ENCODE measurements at regions of chr11 and their contacts with region 1.

Region 1: DNA sequence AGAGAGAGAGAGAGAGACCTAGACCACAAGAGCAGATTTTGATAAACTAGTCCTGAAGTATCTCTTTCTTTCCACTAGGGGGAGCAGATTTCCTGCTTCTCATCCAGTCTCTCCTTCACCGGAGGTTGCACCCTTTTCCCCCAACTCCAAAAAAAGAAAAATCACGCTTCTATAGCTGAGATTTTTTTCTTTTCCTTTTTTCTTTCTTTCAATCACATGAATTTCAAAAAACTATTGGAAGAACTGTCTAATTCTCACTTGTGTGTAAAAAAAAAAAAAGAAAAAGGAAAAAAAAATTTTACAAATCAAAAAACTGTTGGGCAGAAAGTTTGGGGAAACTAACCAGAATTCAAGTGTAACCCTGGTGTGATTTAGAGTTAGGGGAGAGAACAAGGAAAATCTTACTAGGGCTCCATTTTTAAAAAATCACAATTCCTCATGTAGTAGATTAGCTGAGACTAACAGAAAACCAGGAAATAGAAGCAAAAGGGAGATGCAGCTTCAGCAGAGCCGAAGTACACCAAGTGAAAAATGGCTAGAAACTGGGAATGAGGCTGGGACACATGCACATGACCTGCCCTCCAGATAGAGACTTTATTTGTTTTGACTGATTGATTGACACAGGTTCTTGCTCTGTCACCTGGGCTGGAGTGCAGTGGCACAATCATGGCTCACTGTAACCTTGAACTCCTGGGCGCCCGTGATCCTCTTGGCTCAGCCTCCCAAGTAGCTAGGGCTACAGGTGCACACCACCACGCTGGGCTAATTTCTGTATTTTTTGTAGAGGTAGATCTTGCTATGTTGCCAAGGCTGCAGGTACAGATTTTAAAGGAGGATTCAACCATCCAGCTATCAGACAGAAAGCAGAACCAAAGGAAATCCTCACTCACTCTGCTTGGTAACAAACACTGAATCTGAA is 27.1 kb downstream of the SDHD start:
- DNase-seq: peak; percentile 5 to 66
- H3K4me3 ChIP-seq: no peak overlapping the region
- H3K27ac ChIP-seq: no peak overlapping the region
- H3K4me1 ChIP-seq: peaks cover 3% of the 10 kb centered on the region; the same call in 1 of the 2 replicates
- H3K27me3 ChIP-seq: no peaks in the 10 kb centered on the region
- CTCF ChIP-seq: peak; percentile 93

Region 2: GRCh38 chr11:111526501-111526900 is 587.3 kb before region 1 on chr11:
- CTCF ChIA-PET with region 1: no interaction called
- POLR2A ChIA-PET with region 1: no interaction called
- intact Hi-C with region 1: no loop called
- DNase-seq: peak; percentile 2 to 61
- H3K4me3 ChIP-seq: no peak overlapping the region
- H3K27ac ChIP-seq: no peak overlapping the region
- H3K4me1 ChIP-seq: peaks cover 20% of the 10 kb centered on the region
- H3K27me3 ChIP-seq: no peaks in the 10 kb centered on the region
- CTCF ChIP-seq: no peak

Region 3: DNA sequence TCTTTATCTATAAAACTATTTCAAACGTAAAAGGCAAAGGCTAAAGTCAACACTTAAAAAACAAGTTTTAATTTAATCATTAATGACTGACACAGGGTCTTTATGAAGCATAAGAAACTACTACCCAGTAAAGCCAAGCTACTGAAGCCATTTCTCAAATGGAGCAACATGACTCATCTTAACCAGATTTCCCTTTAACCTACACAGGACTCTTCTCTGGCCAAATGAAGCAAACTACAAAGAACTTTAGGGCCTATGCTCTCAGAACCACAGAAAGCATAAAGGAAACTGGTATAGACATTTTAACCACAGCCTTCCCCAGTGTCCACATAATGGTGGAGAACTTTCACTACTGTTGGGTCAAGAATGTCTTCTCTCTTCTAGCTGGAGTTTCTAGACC is 277.1 kb before region 1 on chr11:
- CTCF ChIA-PET with region 1: no interaction called
- POLR2A ChIA-PET with region 1: no interaction called
- intact Hi-C with region 1: no loop called
- DNase-seq: no peak
- H3K4me3 ChIP-seq: no peak overlapping the region
- H3K27ac ChIP-seq: peak overlapping the region; percentile 25
- H3K4me1 ChIP-seq: peaks cover 35% of the 10 kb centered on the region
- H3K27me3 ChIP-seq: no peaks in the 10 kb centered on the region
- CTCF ChIP-seq: no peak

Region 4: DNA sequence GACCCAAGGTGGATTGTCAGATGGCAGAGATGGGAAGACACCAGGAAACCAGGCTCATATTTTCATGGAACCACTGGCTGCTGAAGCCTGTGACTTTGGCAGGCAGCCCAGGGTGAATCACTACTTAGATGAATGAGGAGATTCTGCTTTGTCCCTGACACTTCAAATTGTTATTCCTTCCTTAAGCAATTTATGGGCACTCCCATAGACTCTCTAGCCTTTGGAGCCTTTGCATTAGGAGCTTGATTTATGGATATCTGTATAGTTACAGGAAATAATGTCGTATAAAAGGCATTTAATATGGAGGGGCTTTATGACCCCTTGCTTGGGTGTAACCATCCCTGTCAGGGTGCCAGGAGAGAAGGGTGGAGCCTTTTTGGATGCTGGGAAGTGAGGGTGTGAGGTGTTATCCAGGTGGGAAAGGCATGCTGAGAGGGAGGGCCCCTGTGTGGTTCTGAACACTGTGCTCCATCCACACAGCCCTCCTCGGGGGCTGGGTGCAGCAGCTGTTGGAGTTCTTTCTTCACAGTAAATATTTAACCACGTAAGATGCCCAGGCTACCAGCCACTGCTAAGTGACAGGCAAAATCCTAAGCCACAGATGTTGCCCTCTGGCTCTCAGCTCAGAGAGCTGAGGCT is 14.8 kb after region 1 on chr11:
- CTCF ChIA-PET with region 1: interaction called, 6 read pairs
- POLR2A ChIA-PET with region 1: interaction called, 26 read pairs
- intact Hi-C with region 1: no loop called
- DNase-seq: peak; percentile 81 to 91
- H3K4me3 ChIP-seq: no peak overlapping the region
- H3K27ac ChIP-seq: peak overlapping the region; percentile 25; the same call in 1 of the 2 replicates
- H3K4me1 ChIP-seq: peaks cover 24% of the 10 kb centered on the region
- H3K27me3 ChIP-seq: no peaks in the 10 kb centered on the region
- CTCF ChIP-seq: no peak

Region 5: DNA sequence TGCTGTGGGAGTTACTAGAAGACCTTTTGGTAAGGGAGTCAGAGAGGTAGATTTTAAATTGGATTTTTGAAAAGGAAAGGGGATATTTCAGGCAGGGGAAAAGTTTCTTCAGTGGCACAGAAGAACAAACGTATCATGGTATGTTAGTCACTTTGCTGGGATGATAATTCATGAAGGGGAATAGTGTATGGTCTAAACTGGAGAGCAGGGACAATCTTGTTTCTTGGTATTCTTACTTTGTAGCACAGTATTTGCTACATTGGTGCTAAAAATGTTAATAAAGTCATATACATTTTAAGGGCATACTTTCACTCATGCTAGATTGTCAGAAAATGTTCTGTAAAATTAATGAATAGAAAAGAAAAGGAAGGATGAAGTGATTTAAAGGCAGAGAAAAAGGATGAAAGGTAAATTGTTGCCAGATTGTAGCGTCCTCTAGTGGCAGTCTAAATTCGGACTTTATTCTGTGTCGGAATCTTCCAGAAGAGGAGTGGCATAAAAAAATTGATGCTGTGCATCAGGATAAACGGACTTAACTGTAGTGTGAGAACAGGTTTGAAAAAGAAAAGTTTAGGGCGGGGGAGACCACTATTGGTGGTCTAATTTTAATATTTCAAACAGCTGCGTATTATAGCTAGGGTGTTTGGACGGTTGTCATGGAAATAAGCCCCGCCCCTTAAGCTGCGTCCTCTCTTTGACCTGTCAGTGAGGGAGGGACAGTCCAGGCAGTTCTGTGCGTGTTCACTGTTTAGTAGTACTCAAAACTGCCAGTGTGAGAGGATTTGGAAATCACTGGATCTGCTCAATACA is 61.2 kb after region 1 on chr11 and contains the start of gene BCO2:
- CTCF ChIA-PET with region 1: interaction called, 6 read pairs
- POLR2A ChIA-PET with region 1: no interaction called
- intact Hi-C with region 1: loop called (anchors 1 kb)
- DNase-seq: peak; percentile 76 to 77
- H3K4me3 ChIP-seq: peak within 1 kb of the TSS; percentile 47
- H3K27ac ChIP-seq: no peak within 1 kb of the TSS
- H3K4me1 ChIP-seq: peaks cover 16% of the 10 kb centered on the region
- H3K27me3 ChIP-seq: no peaks in the 10 kb centered on the region
- CTCF ChIP-seq: peak; percentile 98
- total RNA-seq, gene BCO2: 3.0 and 3.3 TPM in 2 replicates

Region 6: DNA sequence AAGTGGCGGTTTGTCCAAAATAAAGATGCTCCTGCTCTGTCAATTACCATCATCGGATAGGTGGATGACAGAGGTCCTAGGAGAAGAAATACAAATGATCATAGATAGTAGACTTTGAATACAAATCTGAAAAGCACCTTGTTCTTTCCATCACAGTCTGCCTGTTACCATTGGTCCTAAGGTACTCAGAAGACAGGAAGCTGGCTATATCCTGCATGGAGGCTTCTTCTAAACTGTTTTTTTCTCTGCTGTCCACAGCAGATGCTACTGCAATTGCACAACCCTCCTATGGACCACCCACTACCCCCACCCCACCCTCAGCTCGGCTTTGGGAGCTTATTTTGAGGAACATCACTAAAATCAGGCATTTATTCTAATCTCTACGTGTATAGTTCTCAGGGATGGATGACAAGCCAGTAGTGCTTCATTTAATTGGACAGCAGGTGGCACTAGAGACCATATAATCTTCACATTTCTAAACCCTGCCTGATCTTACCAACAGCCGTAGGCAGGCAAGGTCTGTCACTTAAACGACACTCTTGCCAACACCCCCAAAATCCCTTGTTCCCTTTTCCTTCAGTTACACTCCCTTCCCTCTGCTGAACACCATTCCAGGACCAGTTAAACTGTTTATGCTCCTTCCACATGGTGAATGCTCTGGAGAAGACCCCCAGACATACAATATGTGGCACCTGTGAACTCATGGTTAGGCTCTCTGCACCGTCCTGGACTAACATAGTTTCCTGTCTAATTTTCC is 105.9 kb after region 1 on chr11:
- CTCF ChIA-PET with region 1: no interaction called
- POLR2A ChIA-PET with region 1: no interaction called
- intact Hi-C with region 1: loop called (anchors 1 kb)
- DNase-seq: peak; percentile 25 to 67
- H3K4me3 ChIP-seq: no peak overlapping the region
- H3K27ac ChIP-seq: no peak overlapping the region
- H3K4me1 ChIP-seq: peaks cover 28% of the 10 kb centered on the region
- H3K27me3 ChIP-seq: no peaks in the 10 kb centered on the region
- CTCF ChIP-seq: peak; percentile 85